Naive thymus-derived CD4-positive, alpha-beta T cell (primary cell): ENCODE measurements at regions of chr4 and their contacts with region 1.

Region 1: GRCh38 chr4:17336524-17336961 is 175.3 kb downstream of the QDPR start:
- DNase-seq: peak; percentile 6 to 87 (median 77)
- ATAC-seq: peak; percentile 91
- H3K4me3 ChIP-seq: no peak overlapping the region
- H3K4me3 Mint-ChIP-seq: peak overlapping the region in 9 of 10 donors; percentile 36 to 73 (median 52)
- H3K27ac ChIP-seq: no peak overlapping the region
- H3K27ac Mint-ChIP-seq: peak overlapping the region; percentile 64 to 90 (median 85)
- H3K4me1 ChIP-seq: peaks cover 16 to 22% of the 10 kb centered on the region in 2 donors
- H3K4me1 Mint-ChIP-seq: peaks cover 13 to 40% (median 26%) of the 10 kb centered on the region in 7 donors
- H3K27me3 ChIP-seq: no peaks in the 10 kb centered on the region
- H3K27me3 Mint-ChIP-seq: peaks cover 0 to 12% (median 0%) of the 10 kb centered on the region in 5 donors

Region 2: DNA sequence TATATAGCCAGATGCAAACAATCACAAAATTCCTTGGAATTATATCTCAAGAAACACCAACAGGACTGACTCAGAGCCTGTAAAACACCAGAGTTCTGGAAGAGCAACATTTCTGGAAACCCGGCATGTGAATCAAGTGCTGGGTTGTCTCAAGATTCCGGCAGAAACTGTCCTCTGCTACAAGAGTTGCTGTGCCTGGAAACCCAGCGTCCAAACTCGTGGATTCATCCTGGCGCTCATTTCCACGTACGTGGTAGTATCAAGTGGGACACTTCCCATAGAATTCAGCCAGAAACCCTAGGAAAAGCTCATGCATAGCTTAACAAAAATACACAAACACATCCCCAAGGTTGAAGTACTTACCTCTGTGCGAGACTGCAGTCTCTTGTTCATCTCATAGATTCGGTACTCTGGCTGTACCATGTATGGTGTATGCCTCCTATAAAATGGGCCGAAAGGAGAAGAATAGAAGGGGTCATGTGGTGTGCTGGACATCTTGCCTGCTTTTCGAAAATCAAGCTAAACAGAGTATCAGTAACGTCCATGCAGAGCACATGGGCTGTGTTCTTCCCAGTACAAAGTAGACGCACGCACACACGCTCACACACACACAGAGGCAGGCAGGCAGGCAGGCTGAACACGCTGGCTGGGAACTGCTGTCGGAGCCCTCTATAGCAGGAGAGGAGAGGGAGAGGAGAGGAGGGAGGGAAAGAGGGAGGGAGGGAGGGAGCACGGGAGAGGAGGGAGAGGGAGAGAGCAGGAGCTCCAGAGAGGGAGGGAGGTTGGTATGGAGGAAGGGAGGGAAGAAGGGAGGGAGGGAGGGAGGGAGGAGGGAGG is 438.3 kb before region 1 on chr4 and contains the start of gene LDB2:
- CTCF ChIA-PET with region 1: no interaction called
- POLR2A ChIA-PET with region 1: no interaction called
- intact Hi-C with region 1: loop called in 1 of 2 experiments (anchors 10 kb)
- DNase-seq: peak in 1 of 9 donors; percentile 12
- ATAC-seq: no peak
- H3K4me3 ChIP-seq: no peak within 1 kb of the TSS
- H3K4me3 Mint-ChIP-seq: peak within 1 kb of the TSS in 9 of 10 donors; percentile 19 to 83 (median 65)
- H3K27ac ChIP-seq: no peak within 1 kb of the TSS
- H3K27ac Mint-ChIP-seq: peak within 1 kb of the TSS in 2 of 9 donors; percentile 46 to 66
- H3K4me1 ChIP-seq: peaks cover 9 to 12% of the 10 kb centered on the region in 2 donors
- H3K4me1 Mint-ChIP-seq: peaks cover 5 to 45% (median 21%) of the 10 kb centered on the region in 7 donors
- H3K27me3 ChIP-seq: no peaks in the 10 kb centered on the region
- H3K27me3 Mint-ChIP-seq: peaks cover 12 to 29% (median 20%) of the 10 kb centered on the region in 5 donors
- total RNA-seq, gene LDB2: 0.29 to 1.5 TPM in 2 of 5 experiments, not detected in the others

Region 3: GRCh38 chr4:17324386-17324830 is 12.1 kb before region 1 on chr4:
- CTCF ChIA-PET with region 1: interaction called, 3 read pairs
- POLR2A ChIA-PET with region 1: no interaction called
- intact Hi-C with region 1: loop called (anchors 1 kb)
- DNase-seq: peak in 7 of 9 donors; percentile 16 to 43 (median 31)
- ATAC-seq: peak; percentile 56
- H3K4me3 ChIP-seq: no peak overlapping the region
- H3K4me3 Mint-ChIP-seq: peak overlapping the region; percentile 22 to 77 (median 57)
- H3K27ac ChIP-seq: no peak overlapping the region
- H3K27ac Mint-ChIP-seq: peak overlapping the region in 5 of 9 donors; percentile 17 to 67 (median 42)
- H3K4me1 ChIP-seq: peaks cover 0 to 6% of the 10 kb centered on the region in 2 donors
- H3K4me1 Mint-ChIP-seq: peaks cover 8 to 14% (median 10%) of the 10 kb centered on the region in 7 donors
- H3K27me3 ChIP-seq: no peaks in the 10 kb centered on the region
- H3K27me3 Mint-ChIP-seq: peaks cover 0 to 4% (median 0%) of the 10 kb centered on the region in 5 donors

Region 4: DNA sequence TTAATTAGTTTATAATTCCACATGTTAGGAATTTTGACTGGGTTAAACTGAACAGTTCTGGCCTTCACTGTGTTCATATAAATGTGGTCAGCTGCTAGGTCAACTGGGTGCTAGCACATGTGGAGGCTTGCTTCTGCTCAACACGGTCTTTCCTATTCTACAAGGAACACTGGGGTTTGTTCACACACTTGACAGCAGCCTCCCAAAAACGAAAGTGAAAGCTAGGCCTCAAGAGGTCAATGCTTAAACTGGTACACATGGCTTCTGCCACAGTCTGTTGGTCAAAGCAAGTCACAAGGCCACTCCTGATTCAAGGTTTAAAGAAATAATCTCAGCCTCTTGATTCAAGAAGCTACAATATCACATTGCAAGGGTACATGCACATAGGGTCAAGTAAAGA is 48.9 kb after region 1 on chr4:
- CTCF ChIA-PET with region 1: no interaction called
- POLR2A ChIA-PET with region 1: no interaction called
- intact Hi-C with region 1: loop called in 1 of 2 experiments (anchors 1 kb)
- DNase-seq: peak in 1 of 9 donors; percentile 7
- ATAC-seq: no peak
- H3K4me3 ChIP-seq: peak overlapping the region; percentile 53
- H3K4me3 Mint-ChIP-seq: peak overlapping the region in 9 of 10 donors; percentile 12 to 70 (median 64)
- H3K27ac ChIP-seq: no peak overlapping the region
- H3K27ac Mint-ChIP-seq: peak overlapping the region in 6 of 9 donors; percentile 32 to 84 (median 70)
- H3K4me1 ChIP-seq: peaks cover 7 to 11% of the 10 kb centered on the region in 2 donors
- H3K4me1 Mint-ChIP-seq: peaks cover 8 to 23% (median 21%) of the 10 kb centered on the region in 7 donors
- H3K27me3 ChIP-seq: peaks cover 0 to 2% of the 10 kb centered on the region in 2 donors
- H3K27me3 Mint-ChIP-seq: no peaks in the 10 kb centered on the region

Region 5: GRCh38 chr4:17397611-17398010 is 61.1 kb after region 1 on chr4:
- CTCF ChIA-PET with region 1: no interaction called
- POLR2A ChIA-PET with region 1: no interaction called
- intact Hi-C with region 1: no loop called
- DNase-seq: no peak
- ATAC-seq: no peak
- H3K4me3 ChIP-seq: no peak overlapping the region
- H3K4me3 Mint-ChIP-seq: no peak overlapping the region
- H3K27ac ChIP-seq: no peak overlapping the region
- H3K27ac Mint-ChIP-seq: no peak overlapping the region
- H3K4me1 ChIP-seq: no peaks in the 10 kb centered on the region
- H3K4me1 Mint-ChIP-seq: no peaks in the 10 kb centered on the region
- H3K27me3 ChIP-seq: no peaks in the 10 kb centered on the region
- H3K27me3 Mint-ChIP-seq: peaks cover 0 to 8% (median 0%) of the 10 kb centered on the region in 5 donors

Region 6: DNA sequence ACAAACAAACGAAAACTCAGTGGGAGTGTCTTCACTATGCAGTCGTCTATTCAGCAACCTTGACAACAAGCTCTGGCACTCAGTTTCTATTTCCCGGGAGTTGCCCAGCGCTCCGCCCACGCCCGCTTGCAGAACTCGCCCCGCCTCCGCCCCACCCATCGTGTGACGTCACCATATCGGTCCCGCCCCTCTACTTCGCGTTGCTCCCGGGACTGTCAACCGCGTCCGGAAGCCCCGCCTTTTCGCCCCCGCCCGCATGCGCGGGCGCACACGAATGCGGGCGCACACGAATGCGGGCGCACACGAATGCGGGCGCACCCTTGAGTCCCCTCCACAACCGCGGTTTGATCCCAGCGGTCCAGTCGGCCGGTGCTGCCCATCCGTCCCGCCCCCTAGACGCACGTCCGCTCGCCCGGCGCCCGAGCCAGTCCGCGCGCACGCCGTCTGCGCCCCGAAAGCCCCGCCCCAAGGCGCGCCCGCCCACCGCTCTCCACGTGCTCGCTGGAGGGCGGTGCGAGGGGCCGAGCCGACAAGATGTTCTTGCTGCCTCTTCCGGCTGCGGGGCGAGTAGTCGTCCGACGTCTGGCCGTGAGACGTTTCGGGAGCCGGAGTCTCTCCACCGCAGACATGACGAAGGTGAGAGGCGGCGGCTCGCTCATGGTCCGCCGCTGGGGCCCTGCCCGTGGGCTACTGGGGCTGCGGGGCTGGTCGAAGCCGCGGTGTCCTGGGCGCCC is 240.6 kb after region 1 on chr4 and contains the start of gene LAP3:
- CTCF ChIA-PET with region 1: no interaction called
- POLR2A ChIA-PET with region 1: no interaction called
- intact Hi-C with region 1: loop called (anchors 1 to 5 kb)
- DNase-seq: peak; percentile 97 to 100 (median 99)
- ATAC-seq: peak; percentile 94
- H3K4me3 ChIP-seq: peak within 1 kb of the TSS; percentile 77
- H3K4me3 Mint-ChIP-seq: peak within 1 kb of the TSS; percentile 78 to 96 (median 92)
- H3K27ac ChIP-seq: peak within 1 kb of the TSS; percentile 96
- H3K27ac Mint-ChIP-seq: peak within 1 kb of the TSS; percentile 92 to 100 (median 97)
- H3K4me1 ChIP-seq: peaks cover 4 to 11% of the 10 kb centered on the region in 2 donors
- H3K4me1 Mint-ChIP-seq: peaks cover 20 to 47% (median 24%) of the 10 kb centered on the region in 7 donors
- H3K27me3 ChIP-seq: no peaks in the 10 kb centered on the region
- H3K27me3 Mint-ChIP-seq: peaks cover 0 to 2% (median 0%) of the 10 kb centered on the region in 5 donors
- total RNA-seq, gene LAP3: 25.2 to 142 (median 54.9) TPM

Region 7: GRCh38 chr4:17810260-17811077 is 473.9 kb after region 1 on chr4 and contains the starts of genes DCAF16 and NCAPG:
- CTCF ChIA-PET with region 1: no interaction called
- POLR2A ChIA-PET with region 1: no interaction called
- intact Hi-C with region 1: loop called (anchors 1 to 5 kb)
- DNase-seq: peak; percentile 97 to 99 (median 97)
- ATAC-seq: peak; percentile 95
- H3K4me3 ChIP-seq: peak within 1 kb of the TSS; percentile 96
- H3K4me3 Mint-ChIP-seq: peak within 1 kb of the TSS; percentile 93 to 100 (median 98)
- H3K27ac ChIP-seq: peak within 1 kb of the TSS; percentile 99
- H3K27ac Mint-ChIP-seq: peak within 1 kb of the TSS; percentile 91 to 99 (median 98)
- H3K4me1 ChIP-seq: peaks cover 16 to 30% of the 10 kb centered on the region in 2 donors
- H3K4me1 Mint-ChIP-seq: peaks cover 50 to 65% (median 59%) of the 10 kb centered on the region in 7 donors
- H3K27me3 ChIP-seq: no peaks in the 10 kb centered on the region
- H3K27me3 Mint-ChIP-seq: no peaks in the 10 kb centered on the region
- total RNA-seq, gene DCAF16: 50.3 to 85.1 (median 73.8) TPM
- total RNA-seq, gene NCAPG: 0.24 to 44.1 (median 0.35) TPM